ENCODE measurements at regions of chr13 and their contacts with region 1.

Region 1: GRCh38 chr13:46126552-46127357 is 21.9 kb upstream of the CPB2 start:
- DNase-seq: peak; percentile 45
- H3K4me3 ChIP-seq: no peak overlapping the region
- H3K27ac ChIP-seq: no peak overlapping the region
- H3K4me1 ChIP-seq: peaks cover 0 to 5% (median 0%) of the 10 kb centered on the region in 4 donors
- H3K27me3 ChIP-seq: no peaks in the 10 kb centered on the region
- CTCF ChIP-seq: peak; percentile 41 to 55 (median 47)
- EP300 ChIP-seq: no peak
- POLR2A ChIP-seq: no peak

Region 2: GRCh38 chr13:45257638-45258338 is 869.0 kb before region 1 on chr13:
- in situ Hi-C with region 1: no loop called
- intact Hi-C with region 1: loop called (anchors 10 kb)
- DNase-seq: no peak
- H3K4me3 ChIP-seq: no peak overlapping the region
- H3K27ac ChIP-seq: peak overlapping the region in 3 of 4 donors; percentile 36 to 38 (median 36)
- H3K4me1 ChIP-seq: peaks cover 0 to 44% (median 24%) of the 10 kb centered on the region in 4 donors
- H3K27me3 ChIP-seq: no peaks in the 10 kb centered on the region
- CTCF ChIP-seq: no peak
- EP300 ChIP-seq: no peak
- POLR2A ChIP-seq: no peak

Measured in transverse colon (tissue), 4 donors.